ENCODE measurements at regions of chr16 and their contacts with region 1.

Region 1: DNA sequence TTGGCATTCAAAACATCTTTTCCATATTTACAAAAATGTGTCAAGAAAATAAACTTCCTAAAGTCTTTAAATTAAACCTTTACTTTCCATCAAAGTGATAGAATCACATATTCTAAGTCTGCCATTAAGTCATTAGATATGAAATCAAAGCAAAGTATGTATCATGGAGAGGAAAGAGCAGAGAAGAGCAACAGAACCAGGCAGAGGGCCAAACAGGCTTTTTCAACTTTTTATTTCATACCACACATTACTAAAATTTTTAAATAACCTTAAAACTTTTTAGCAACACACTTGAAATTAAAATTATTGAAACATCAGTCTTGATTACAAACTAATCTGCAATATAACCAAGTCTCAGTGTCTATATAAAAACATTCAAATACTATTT is 13.8 kb downstream of the SIAH1 start:
- DNase-seq: no peak
- ATAC-seq: no peak
- H3K4me3 ChIP-seq: no peak overlapping the region
- H3K27ac ChIP-seq: no peak overlapping the region
- H3K4me1 ChIP-seq: peaks cover 20% of the 10 kb centered on the region
- H3K27me3 ChIP-seq: no peaks in the 10 kb centered on the region
- CTCF ChIP-seq: no peak
- POLR2A ChIP-seq: no peak
- RAD21 ChIP-seq: no peak

Region 2: GRCh38 chr16:48340054-48340453 is 31.3 kb before region 1 on chr16:
- CTCF ChIA-PET with region 1: no interaction called
- POLR2A ChIA-PET with region 1: no interaction called
- dilution Hi-C with region 1: no loop called
- in situ Hi-C with region 1: no loop called
- intact Hi-C with region 1: no loop called
- DNase-seq: no peak
- ATAC-seq: no peak
- H3K4me3 ChIP-seq: no peak overlapping the region
- H3K27ac ChIP-seq: no peak overlapping the region
- H3K4me1 ChIP-seq: peaks cover 8% of the 10 kb centered on the region
- H3K27me3 ChIP-seq: no peaks in the 10 kb centered on the region
- CTCF ChIP-seq: no peak
- POLR2A ChIP-seq: no peak
- RAD21 ChIP-seq: no peak

Region 3: DNA sequence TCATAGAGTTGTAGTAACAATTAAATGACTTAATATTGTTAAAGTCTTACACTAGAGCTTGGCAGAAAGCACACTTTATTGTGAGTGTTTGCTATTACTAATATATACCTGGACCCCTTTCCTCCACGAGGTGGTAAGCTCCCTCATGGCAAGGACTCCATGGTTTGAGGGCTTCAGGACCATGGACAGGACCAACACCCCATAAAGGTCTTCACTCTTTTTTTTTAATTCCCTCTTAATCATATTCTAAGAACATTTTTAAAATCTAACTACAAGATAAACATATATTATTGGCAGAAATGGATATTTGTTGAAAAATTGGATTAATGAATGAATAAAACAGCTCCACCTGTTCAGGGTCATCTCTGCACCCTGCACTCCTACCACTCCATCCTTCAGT is 755.7 kb after region 1 on chr16:
- CTCF ChIA-PET with region 1: interaction called, 11 read pairs
- POLR2A ChIA-PET with region 1: no interaction called
- dilution Hi-C with region 1: no loop called
- in situ Hi-C with region 1: no loop called
- intact Hi-C with region 1: no loop called
- DNase-seq: no peak
- ATAC-seq: no peak
- H3K4me3 ChIP-seq: no peak overlapping the region
- H3K27ac ChIP-seq: no peak overlapping the region
- H3K4me1 ChIP-seq: no peaks in the 10 kb centered on the region
- H3K27me3 ChIP-seq: no peaks in the 10 kb centered on the region
- CTCF ChIP-seq: no peak
- POLR2A ChIP-seq: no peak
- RAD21 ChIP-seq: no peak